Activated CD4-positive, alpha-beta memory T cell treated with anti-CD3 and anti-CD28 coated beads, Interleukin-2, amount 10 ng/mL, durations not matched to agents 7 days and 5 days (primary cell): ENCODE measurements at regions of chr16 and their contacts with region 1.

Region 1: DNA sequence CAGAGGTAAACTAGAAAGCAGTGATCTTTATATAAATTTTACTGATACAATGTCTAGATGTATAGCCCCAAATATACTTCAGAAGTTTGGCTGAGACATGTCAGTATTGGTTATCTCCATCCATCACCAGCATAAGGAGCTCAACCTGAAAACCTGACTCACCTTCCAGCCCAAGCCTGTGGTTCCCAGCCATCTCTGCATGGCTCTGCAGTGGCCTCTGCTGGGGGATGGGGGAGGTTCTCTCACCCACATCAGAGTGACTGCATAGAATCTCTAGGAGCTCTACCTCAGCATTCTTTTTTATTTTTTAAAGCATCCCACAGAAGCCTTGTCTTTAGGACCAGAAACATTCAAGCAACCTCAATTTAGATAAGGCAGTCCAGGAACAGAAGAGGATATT is 27.3 kb downstream of the USP7 start:
- DNase-seq: peak; percentile 81
- H3K4me3 Mint-ChIP-seq: no peak overlapping the region
- H3K27ac Mint-ChIP-seq: peak overlapping the region; percentile 1
- H3K4me1 Mint-ChIP-seq: peaks cover 49% of the 10 kb centered on the region
- H3K27me3 Mint-ChIP-seq: no peaks in the 10 kb centered on the region

Region 2: GRCh38 chr16:8537691-8538342 is 398.6 kb before region 1 on chr16:
- CTCF ChIA-PET with region 1: no interaction called
- POLR2A ChIA-PET with region 1: no interaction called
- DNase-seq: no peak
- H3K4me3 Mint-ChIP-seq: no peak overlapping the region
- H3K27ac Mint-ChIP-seq: no peak overlapping the region
- H3K4me1 Mint-ChIP-seq: no peaks in the 10 kb centered on the region
- H3K27me3 Mint-ChIP-seq: peaks cover 1% of the 10 kb centered on the region

Region 3: GRCh38 chr16:8878521-8878911 is 57.9 kb before region 1 on chr16:
- CTCF ChIA-PET with region 1: interaction called, 16 read pairs
- POLR2A ChIA-PET with region 1: no interaction called
- DNase-seq: no peak
- H3K4me3 Mint-ChIP-seq: no peak overlapping the region
- H3K27ac Mint-ChIP-seq: no peak overlapping the region
- H3K4me1 Mint-ChIP-seq: peaks cover 30% of the 10 kb centered on the region
- H3K27me3 Mint-ChIP-seq: no peaks in the 10 kb centered on the region

Region 4: DNA sequence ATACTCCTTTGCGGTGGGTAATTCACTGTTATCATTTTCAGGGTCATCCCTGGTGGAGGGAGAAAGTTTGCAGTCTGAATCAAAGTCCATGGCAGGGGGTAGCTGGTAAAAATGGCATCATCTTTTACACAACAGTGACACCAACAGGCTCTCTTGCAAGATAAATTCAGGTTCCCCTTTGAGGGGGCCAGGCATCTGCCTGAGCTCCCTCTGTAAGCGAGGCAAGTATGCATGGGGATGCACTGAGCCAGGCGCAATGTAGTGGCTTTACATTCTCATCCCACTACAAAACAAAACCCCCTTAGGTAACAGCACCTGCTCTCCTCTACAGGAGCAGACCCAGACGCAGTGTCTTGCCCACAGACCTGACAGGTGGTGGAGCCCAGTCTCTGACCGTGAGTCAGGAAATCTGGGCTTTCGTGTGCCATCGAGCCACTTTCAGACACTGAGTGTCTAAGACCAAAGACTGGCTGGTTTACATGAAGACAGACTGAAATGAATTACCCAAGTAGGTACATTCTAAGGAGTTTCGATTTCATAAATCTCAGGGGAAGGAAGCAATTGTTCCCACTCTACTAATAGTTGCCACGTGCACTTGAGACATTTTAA is 36.6 kb before region 1 on chr16:
- CTCF ChIA-PET with region 1: interaction called, 28 read pairs
- POLR2A ChIA-PET with region 1: no interaction called
- DNase-seq: no peak
- H3K4me3 Mint-ChIP-seq: no peak overlapping the region
- H3K27ac Mint-ChIP-seq: no peak overlapping the region
- H3K4me1 Mint-ChIP-seq: no peaks in the 10 kb centered on the region
- H3K27me3 Mint-ChIP-seq: no peaks in the 10 kb centered on the region

Region 5: GRCh38 chr16:8905168-8905762 is 31.2 kb before region 1 on chr16:
- CTCF ChIA-PET with region 1: interaction called, 82 read pairs
- POLR2A ChIA-PET with region 1: interaction called, 8 read pairs
- DNase-seq: no peak
- H3K4me3 Mint-ChIP-seq: no peak overlapping the region
- H3K27ac Mint-ChIP-seq: no peak overlapping the region
- H3K4me1 Mint-ChIP-seq: peaks cover 25% of the 10 kb centered on the region
- H3K27me3 Mint-ChIP-seq: no peaks in the 10 kb centered on the region

Region 6: GRCh38 chr16:8920645-8921346 is 15.6 kb before region 1 on chr16:
- CTCF ChIA-PET with region 1: interaction called, 82 read pairs
- POLR2A ChIA-PET with region 1: interaction called, 4 read pairs
- DNase-seq: no peak
- H3K4me3 Mint-ChIP-seq: no peak overlapping the region
- H3K27ac Mint-ChIP-seq: peak overlapping the region; percentile 81
- H3K4me1 Mint-ChIP-seq: peaks cover 90% of the 10 kb centered on the region
- H3K27me3 Mint-ChIP-seq: no peaks in the 10 kb centered on the region

Region 7: DNA sequence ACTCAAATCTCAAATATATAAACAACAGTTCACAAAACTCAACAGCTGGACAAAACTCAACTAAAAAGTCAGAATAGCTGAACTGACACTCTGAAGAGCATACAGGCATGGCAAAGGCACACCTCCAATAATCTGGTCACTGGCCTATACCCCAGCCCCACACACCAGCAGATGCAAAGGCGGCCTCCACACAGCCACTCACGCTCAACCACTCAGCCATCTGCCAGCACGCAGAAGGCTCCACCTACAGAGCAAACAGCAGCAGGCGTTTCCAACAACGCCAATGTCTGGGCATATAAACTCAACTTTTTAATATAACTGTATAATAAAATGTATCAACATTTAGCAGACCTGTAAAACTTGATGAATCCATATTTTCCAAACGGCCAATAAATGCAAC is 10.1 kb after region 1 on chr16:
- CTCF ChIA-PET with region 1: interaction called, 62 read pairs
- POLR2A ChIA-PET with region 1: interaction called, 3 read pairs
- DNase-seq: no peak
- H3K4me3 Mint-ChIP-seq: no peak overlapping the region
- H3K27ac Mint-ChIP-seq: no peak overlapping the region
- H3K4me1 Mint-ChIP-seq: peaks cover 84% of the 10 kb centered on the region
- H3K27me3 Mint-ChIP-seq: no peaks in the 10 kb centered on the region

Region 8: DNA sequence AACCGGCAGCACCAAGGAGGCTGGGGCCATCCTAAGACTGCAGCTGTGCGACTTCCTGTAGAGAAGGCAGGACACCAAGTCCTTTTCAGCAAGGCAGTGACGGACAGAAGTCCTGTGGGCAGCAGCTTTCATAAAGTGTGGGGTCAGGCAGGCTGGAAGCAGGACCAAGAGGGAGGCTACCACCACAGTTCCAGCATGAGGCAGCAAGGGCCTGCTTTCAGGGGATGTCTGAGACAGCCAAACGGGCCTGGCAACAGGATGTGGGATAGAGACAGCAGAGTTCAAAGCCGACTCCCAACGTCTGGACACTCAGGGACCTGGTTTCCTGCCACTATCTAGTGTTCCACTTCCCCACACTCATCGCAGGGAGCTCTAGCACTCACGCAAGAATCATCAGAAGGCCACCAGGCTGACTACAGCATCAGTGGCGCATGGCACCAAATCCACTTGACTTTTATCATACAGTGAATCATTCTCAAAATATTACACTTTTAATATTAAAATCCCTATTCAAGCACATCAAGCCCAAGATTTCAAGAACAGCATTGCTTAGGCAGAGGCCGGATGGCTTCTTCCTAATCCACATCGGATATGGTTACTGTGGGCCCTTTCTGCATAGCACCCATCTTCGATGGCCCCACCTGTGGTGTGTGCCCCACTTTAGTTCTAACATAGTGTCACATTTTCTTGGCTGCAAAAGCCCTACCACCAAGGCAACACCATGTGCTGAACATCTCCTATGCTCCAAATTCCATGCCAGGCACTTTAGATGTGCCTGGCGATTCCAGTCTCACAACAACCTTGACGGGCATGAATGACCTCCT is 22.1 kb after region 1 on chr16:
- CTCF ChIA-PET with region 1: interaction called, 18 read pairs
- POLR2A ChIA-PET with region 1: interaction called, 11 read pairs
- DNase-seq: peak; percentile 55
- H3K4me3 Mint-ChIP-seq: peak overlapping the region; percentile 94
- H3K27ac Mint-ChIP-seq: peak overlapping the region; percentile 91
- H3K4me1 Mint-ChIP-seq: peaks cover 78% of the 10 kb centered on the region
- H3K27me3 Mint-ChIP-seq: no peaks in the 10 kb centered on the region

Region 9: DNA sequence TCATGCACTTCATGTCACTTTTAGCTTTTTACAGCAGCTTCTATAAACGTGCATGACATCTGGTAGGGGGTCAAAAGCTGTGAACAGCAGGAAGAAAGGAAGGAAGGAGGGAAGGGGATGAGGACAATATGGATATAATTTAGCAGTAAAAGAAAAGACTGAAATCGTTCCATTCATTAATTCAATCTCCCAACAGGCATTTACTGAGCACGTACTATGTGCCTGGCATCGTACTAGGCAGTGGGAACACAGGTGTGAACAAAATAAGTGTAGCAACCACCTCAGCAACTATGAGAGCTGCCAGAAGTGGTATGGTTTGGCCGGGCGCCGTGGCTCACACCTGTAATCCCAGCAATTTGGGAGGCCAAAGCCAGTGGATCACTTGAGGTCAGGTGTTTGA is 46.4 kb after region 1 on chr16:
- CTCF ChIA-PET with region 1: no interaction called
- POLR2A ChIA-PET with region 1: no interaction called
- DNase-seq: no peak
- H3K4me3 Mint-ChIP-seq: no peak overlapping the region
- H3K27ac Mint-ChIP-seq: no peak overlapping the region
- H3K4me1 Mint-ChIP-seq: no peaks in the 10 kb centered on the region
- H3K27me3 Mint-ChIP-seq: no peaks in the 10 kb centered on the region